A673 (cell line): ENCODE measurements at regions of chr1 and their contacts with region 1.

Region 1: GRCh38 chr1:108643492-108644335 is 17.2 kb downstream of the HENMT1 start:
- DNase-seq: peak; percentile 77
- H3K4me3 ChIP-seq: no peak overlapping the region
- H3K27ac ChIP-seq: no peak overlapping the region
- H3K4me1 ChIP-seq: peaks cover 8% of the 10 kb centered on the region
- H3K27me3 ChIP-seq: no peaks in the 10 kb centered on the region
- CTCF ChIP-seq: peak; percentile 75

Region 2: DNA sequence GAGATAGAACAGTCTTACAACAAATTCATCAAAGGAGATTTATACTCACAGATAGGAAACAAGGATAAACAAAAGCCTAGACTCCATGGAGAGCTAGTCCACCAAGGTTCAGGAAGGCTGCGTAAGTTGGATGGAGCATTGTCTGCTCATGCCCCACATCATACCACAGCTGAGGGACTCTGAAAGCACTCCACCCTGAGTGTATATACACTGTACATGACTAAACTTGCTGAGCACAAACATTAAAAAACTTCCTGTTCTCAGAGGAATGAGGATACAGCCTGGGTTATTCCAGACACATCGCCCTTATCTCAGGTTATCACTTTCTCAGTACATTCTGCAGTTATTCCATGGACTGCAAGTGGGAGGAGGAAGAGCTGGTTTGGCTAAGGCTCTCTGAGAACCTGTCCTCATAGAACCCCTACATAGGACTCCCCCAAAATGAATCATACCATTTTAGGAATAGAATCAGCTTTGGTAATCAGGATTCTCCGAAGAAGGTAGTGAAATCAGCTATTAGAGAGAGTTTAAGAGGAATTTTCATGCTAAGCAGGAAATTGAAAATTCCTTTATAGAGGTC is 1645.2 kb before region 1 on chr1:
- CTCF ChIA-PET with region 1: interaction called, 12 read pairs
- POLR2A ChIA-PET with region 1: no interaction called
- intact Hi-C with region 1: no loop called
- DNase-seq: no peak
- H3K4me3 ChIP-seq: no peak overlapping the region
- H3K27ac ChIP-seq: no peak overlapping the region
- H3K4me1 ChIP-seq: no peaks in the 10 kb centered on the region
- H3K27me3 ChIP-seq: no peaks in the 10 kb centered on the region
- CTCF ChIP-seq: no peak

Region 3: GRCh38 chr1:108316545-108316944 is 327.2 kb before region 1 on chr1:
- CTCF ChIA-PET with region 1: interaction called, 12 read pairs
- POLR2A ChIA-PET with region 1: no interaction called
- intact Hi-C with region 1: no loop called
- DNase-seq: peak; percentile 15
- H3K4me3 ChIP-seq: no peak overlapping the region
- H3K27ac ChIP-seq: no peak overlapping the region
- H3K4me1 ChIP-seq: no peaks in the 10 kb centered on the region
- H3K27me3 ChIP-seq: peaks cover 41% of the 10 kb centered on the region
- CTCF ChIP-seq: peak; percentile 47

Region 4: GRCh38 chr1:108559215-108560186 is 84.2 kb before region 1 on chr1 and contains the start of gene EEIG2:
- CTCF ChIA-PET with region 1: interaction called, 3 read pairs
- POLR2A ChIA-PET with region 1: no interaction called
- intact Hi-C with region 1: loop called (anchors 5 kb)
- DNase-seq: peak; percentile 95
- H3K4me3 ChIP-seq: peak within 1 kb of the TSS; percentile 58
- H3K27ac ChIP-seq: peak within 1 kb of the TSS; percentile 45
- H3K4me1 ChIP-seq: peaks cover 9% of the 10 kb centered on the region
- H3K27me3 ChIP-seq: no peaks in the 10 kb centered on the region
- CTCF ChIP-seq: peak; percentile 59
- total RNA-seq, gene EEIG2: 14.6 and 15.7 TPM in 2 replicates

Region 5: DNA sequence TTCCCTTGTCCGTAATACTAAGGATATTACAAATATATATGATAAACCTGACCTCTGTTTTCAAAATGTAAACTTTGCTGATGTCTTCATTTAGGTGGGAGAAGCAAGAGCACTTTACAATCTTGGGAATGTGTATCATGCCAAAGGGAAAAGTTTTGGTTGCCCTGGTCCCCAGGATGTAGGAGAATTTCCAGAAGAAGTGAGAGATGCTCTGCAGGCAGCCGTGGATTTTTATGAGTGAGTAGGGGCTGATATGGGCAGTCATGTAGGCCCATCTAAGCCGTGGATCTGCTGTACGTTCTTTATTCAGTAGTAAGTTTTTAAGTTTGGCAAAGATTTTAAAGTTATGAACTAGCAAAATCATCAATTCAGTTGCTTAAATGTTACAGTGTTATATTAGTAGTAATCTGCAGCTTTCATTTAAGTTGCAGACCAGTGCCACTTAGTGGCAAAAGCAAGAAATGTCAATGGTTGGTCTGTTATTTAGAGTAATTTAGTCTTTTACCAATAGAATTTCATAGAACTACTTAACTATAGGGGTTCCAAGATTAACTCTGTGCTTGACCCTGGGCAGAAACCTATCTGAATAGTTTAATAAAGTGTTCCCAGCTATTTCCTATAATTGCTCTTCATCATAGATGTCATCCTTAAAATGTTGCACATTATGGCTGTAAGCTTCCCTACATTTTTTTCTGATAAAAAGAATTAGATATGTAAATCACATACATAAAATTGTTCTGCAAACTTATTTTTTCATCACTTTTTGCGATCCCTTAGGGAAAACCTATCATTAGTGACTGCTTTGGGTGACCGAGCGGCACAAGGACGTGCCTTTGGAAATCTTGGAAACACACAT is 254.4 kb after region 1 on chr1:
- CTCF ChIA-PET with region 1: no interaction called
- POLR2A ChIA-PET with region 1: no interaction called
- intact Hi-C with region 1: loop called (anchors 5 kb)
- DNase-seq: peak; percentile 77
- H3K4me3 ChIP-seq: no peak overlapping the region
- H3K27ac ChIP-seq: no peak overlapping the region
- H3K4me1 ChIP-seq: no peaks in the 10 kb centered on the region
- H3K27me3 ChIP-seq: no peaks in the 10 kb centered on the region
- CTCF ChIP-seq: peak; percentile 80